ENCODE measurements at regions of chr14 and their contacts with region 1.

Region 1: GRCh38 chr14:23910101-23910875 is 43.3 kb upstream of the DHRS4 start:
- DNase-seq: peak; percentile 3
- H3K4me3 ChIP-seq: no peak overlapping the region
- H3K27ac ChIP-seq: no peak overlapping the region
- H3K27me3 ChIP-seq: no peaks in the 10 kb centered on the region
- CTCF ChIP-seq: peak; percentile 93

Region 2: GRCh38 chr14:23588884-23589598 is 321.2 kb before region 1 on chr14:
- CTCF ChIA-PET with region 1: interaction called, 56 read pairs
- POLR2A ChIA-PET with region 1: no interaction called
- DNase-seq: peak; percentile 60
- H3K4me3 ChIP-seq: no peak overlapping the region
- H3K27ac ChIP-seq: no peak overlapping the region
- H3K27me3 ChIP-seq: no peaks in the 10 kb centered on the region
- CTCF ChIP-seq: peak; percentile 79

Region 3: DNA sequence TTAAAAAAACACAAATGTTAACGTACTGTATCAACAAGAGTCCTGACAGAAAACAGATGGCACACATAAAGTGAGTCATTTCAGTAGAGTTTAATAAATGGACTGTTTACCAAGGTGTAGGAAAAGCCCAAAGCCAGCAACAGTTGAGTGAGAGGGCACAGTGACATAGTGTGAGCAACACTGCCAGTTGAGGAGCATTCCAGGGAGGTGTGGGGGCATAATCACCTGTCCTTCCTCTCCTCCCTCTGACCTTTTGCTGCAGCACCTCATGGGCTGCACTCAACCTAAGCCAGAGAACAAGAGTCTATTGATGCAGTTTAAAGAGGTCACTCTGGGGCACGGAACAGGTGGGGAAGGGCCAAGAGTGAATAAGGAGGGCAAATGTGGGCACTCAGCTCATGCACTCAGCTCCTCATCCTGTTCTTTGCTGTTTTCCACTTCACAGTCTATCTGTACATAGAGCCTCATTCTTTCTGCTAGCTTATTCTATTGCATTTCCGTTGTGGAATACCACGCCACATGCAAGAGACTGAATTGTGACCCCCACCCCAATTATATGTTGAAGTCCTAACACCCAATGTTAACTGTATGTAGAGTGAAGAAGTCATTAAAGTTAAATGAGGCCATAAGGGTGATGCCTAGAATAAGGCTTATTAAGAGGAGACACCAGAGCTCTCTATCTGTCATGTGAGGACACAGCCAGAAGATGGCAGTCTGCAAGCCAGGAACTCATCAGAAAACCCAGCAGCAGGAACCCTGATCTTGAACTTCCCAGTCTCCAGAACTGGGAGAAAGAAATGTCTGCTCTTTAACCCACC is 244.7 kb before region 1 on chr14:
- CTCF ChIA-PET with region 1: interaction called, 44 read pairs
- POLR2A ChIA-PET with region 1: no interaction called
- DNase-seq: peak; percentile 2
- H3K4me3 ChIP-seq: no peak overlapping the region
- H3K27ac ChIP-seq: no peak overlapping the region
- H3K27me3 ChIP-seq: peaks cover 10% of the 10 kb centered on the region
- CTCF ChIP-seq: peak; percentile 65

Region 4: DNA sequence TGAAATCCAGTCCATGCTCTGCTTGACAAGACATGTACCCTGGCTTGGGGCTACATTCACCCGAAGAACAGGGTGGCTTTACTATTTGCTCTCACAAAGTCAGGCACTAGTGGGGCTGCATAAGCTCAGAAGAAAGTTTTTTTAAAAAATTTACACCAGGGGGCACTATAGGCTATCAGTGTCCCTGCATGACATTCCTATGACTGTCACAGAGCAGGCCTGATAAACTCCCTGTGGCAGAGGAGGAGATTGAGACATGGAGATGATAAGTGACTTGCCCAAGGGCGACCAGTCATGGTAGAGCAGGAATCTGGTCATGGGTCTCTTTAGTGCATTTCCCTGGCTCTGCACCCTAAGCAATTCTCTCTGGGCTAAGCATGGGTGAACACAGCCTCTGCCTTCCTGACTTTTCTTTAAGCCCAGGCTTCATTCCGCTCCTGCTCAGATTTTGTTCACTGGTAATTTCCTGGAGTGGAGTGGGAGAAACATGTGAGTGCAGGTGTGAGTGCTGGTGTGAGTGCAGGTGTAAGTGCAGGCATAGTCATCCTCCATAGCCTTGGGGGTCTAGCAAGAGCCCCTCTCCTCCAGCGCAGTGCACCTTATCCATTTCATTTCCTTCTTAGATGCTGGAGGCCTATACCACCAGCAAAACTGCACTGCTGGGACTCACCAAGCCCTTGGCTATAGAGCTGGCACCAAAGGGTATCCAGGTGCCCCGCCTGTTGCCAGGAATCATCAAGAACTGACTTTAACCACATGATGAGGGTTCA is 182.5 kb before region 1 on chr14:
- CTCF ChIA-PET with region 1: interaction called, 43 read pairs
- POLR2A ChIA-PET with region 1: no interaction called
- DNase-seq: no peak
- H3K4me3 ChIP-seq: no peak overlapping the region
- H3K27ac ChIP-seq: no peak overlapping the region
- H3K27me3 ChIP-seq: no peaks in the 10 kb centered on the region
- CTCF ChIP-seq: peak; percentile 27

Region 5: DNA sequence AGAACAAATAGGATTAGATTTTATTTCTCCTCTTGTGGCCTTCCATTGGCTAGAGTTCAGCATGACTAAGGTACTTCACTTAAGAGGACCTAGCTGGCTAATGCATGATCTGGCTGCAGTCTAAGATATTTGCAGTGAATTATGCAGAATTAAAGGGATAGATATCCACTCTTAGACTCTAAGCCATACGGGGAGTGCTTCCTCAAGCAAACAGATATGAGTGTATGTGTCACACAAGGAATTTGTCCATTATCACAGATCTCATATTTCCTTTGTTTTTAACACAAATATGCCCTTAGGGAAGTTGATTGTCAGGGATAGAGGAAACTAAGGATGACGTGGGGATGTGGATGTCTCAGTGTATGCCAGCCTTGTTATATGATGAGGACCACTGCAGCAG is 44.8 kb before region 1 on chr14:
- CTCF ChIA-PET with region 1: no interaction called
- POLR2A ChIA-PET with region 1: no interaction called
- DNase-seq: no peak
- H3K4me3 ChIP-seq: no peak overlapping the region
- H3K27ac ChIP-seq: no peak overlapping the region
- H3K27me3 ChIP-seq: no peaks in the 10 kb centered on the region
- CTCF ChIP-seq: no peak

Region 6: DNA sequence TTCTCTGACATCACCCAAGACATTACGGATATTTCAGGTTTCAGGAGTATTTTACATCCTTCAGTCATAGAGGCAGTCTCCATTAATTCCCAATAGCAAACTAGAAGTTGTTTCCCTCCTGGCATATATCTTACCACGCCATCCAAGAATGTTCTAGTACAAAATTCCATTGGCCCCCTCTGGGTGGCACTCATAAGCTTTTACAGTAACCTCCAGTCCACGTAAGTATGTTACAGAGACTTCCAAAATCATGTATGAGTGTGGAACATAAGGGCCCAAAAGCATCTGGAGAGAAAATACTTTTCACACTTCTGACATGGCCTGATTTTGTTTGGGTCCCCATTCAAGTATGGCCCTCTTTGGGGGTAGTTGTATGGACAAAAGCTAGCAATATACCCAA is 14.8 kb before region 1 on chr14:
- CTCF ChIA-PET with region 1: interaction called, 16 read pairs
- POLR2A ChIA-PET with region 1: no interaction called
- DNase-seq: no peak
- H3K4me3 ChIP-seq: no peak overlapping the region
- H3K27ac ChIP-seq: no peak overlapping the region
- H3K27me3 ChIP-seq: no peaks in the 10 kb centered on the region
- CTCF ChIP-seq: 0 out of 2 replicates have a peak, but pooled peaks have one; percentile 2

Region 7: DNA sequence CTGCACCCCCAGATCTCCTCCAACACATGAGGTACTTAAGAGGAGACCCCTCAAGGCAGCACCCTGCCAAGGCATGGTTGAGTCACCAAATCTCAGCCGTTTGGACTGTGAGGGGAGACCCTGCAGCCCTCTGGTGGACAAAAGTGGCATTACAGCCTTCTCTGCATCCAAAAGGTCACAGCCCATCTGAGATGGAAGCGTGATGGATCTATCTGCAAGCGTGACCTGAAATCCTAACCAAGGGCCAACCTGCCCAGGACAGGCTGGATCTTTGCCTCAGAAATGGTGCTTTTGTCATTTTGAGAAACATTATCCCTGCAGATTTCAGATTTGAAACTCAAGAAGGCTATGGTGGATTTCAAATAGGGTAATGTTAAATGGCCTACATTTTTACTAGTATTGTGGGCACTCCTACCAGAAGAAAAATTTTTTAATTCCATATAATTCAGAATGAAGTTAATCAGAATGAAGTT is 19.6 kb after region 1 on chr14:
- CTCF ChIA-PET with region 1: interaction called, 12 read pairs
- POLR2A ChIA-PET with region 1: no interaction called
- DNase-seq: peak; percentile 53
- H3K4me3 ChIP-seq: no peak overlapping the region
- H3K27ac ChIP-seq: no peak overlapping the region
- H3K27me3 ChIP-seq: peaks cover 4% of the 10 kb centered on the region
- CTCF ChIP-seq: peak; percentile 96

Region 8: DNA sequence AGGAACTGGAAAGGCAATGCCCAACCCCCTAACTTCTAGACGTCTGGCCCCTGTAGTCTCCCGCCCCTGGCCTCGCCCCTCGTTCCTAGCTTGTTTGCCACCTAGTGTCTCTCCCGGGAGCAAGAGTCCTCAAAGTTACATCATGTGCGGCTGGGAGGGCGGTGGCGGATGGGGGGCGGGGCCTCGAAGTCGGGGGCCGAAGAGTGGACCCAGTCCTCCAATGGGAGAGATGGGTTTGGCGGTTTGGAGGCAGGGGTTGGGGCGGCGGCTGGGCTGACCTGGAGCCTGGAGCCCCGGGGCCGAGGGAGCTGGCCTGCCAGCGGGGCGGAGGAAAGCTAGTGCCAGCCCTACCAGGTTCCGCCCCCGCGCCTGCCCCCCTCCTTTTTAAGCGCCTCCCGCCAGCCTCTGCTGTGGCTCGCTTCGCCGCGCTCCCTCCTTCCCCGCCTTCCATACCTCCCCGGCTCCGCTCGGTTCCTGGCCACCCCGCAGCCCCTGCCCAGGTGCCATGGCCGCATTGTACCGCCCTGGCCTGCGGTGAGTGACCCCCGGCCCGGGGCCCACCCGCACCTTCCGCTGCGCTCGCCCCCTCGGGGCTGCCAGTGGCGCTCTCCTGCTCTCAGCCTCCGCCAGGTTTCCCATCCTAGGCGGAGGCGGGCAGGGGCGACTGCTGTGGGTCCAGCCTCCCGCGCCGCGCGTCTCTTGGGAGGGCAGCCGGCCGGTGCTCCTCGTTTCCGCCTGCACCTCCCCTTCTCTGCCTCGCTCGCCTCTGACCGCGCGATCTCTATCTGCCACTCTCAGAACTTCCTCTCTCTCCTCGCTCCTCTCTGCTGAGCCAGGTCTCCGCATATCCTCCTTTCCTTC is 183.8 kb after region 1 on chr14 and contains the start of gene PCK2:
- CTCF ChIA-PET with region 1: no interaction called
- POLR2A ChIA-PET with region 1: no interaction called
- DNase-seq: peak; percentile 73
- H3K4me3 ChIP-seq: peak within 1 kb of the TSS; percentile 83
- H3K27ac ChIP-seq: peak within 1 kb of the TSS; percentile 68
- H3K27me3 ChIP-seq: no peaks in the 10 kb centered on the region
- CTCF ChIP-seq: no peak
- polyA plus RNA-seq, gene PCK2: 47.0 and 59.9 TPM in 2 replicates

Measured in AG04450 (cell line).